GM10248 (cell line): ENCODE measurements at regions of chr22 and their contacts with region 1.

Region 1: DNA sequence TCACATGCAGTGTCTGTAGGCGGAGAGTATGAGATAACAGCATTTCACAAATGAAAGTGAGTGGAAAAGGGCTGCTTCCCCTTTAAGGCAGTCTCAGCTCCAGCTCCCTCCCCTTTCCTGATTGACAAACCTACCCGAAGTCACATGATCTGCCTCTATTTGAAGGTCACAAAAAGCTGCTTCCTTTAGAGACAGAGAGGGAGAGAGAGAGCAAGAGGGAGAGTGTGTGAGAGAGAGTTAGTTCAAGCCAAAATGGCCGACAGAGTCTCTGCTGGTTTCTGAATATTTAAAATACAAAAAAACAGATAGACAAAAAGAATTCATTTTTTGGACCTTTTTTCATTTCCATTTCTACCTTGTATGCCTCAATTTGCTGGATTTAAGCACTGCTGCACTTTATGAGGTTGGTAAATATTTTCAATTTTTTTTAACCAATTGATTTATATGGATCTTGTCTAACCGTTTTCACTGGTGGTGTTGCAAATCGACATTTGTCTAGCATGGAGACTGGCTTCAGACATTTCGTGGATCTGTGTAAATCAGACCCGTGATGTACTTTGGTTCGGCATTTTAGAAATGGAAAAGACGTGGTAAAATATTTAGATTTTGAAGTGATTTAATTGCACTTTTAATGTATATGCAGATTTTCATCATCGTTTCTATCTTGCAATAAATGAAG is at the start of gene TNRC6B:
- DNase-seq: peak; percentile 81
- CTCF ChIP-seq: no peak

Region 2: DNA sequence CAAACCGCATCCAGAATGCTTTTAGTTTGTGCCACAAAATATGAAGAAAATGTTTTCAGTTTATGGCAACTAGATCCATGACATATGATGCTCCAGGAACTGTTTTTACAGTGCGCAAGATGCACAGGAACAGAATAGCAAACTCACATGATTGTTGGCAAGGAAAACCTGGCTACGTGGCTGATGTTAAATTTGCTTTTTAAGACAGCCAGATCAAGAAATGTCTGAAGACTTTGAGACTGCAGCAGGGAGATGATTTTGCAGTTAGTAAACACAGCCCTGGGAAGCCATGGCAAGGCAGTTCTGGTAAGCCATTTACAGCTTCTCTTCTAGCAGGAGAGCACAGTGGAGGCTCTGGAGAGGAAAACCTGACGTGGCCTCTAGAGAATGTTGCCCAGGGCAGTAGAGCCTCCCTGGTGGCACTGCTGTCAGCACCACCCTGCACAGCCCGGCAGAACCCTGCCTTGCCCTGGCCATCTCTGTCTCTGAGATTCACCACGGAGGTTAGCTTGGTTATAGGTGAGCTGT is 70.0 kb before region 1 on chr22:
- CTCF ChIA-PET with region 1: no interaction called
- POLR2A ChIA-PET with region 1: no interaction called
- DNase-seq: no peak
- CTCF ChIP-seq: no peak

Region 3: DNA sequence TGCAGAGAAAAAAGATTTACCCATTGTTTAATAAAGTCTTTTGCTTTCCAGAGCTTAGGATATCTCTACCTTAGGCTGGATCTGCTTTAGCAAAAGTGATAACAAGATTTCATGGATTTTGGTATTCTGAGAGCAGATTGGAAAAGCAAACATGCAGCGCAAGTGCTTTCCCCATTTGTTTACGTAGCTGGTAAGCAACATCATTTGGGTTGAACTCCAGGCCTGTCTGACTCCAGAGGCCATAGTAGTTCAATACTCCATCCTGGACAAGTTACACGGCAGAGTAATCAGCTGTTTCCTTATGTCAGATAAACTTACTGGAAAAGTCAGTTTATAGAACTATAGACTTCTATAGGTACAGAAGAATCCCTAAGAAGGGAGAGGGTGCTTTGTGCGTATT is 40.7 kb before region 1 on chr22:
- CTCF ChIA-PET with region 1: no interaction called
- POLR2A ChIA-PET with region 1: no interaction called
- DNase-seq: no peak
- CTCF ChIP-seq: no peak

Region 4: GRCh38 chr22:40193429-40194421 is 15.8 kb after region 1 on chr22:
- CTCF ChIA-PET with region 1: interaction called, 16 read pairs
- POLR2A ChIA-PET with region 1: interaction called, 3 read pairs
- DNase-seq: no peak
- CTCF ChIP-seq: no peak